Activated CD4-positive, alpha-beta memory T cell treated with anti-CD3 and anti-CD28 coated beads, Interleukin-2, amount 10 ng/mL, durations not matched to agents 7 days and 5 days (primary cell): ENCODE measurements at regions of chr9 and their contacts with region 1.

Region 1: GRCh38 chr9:131733541-131734061 is 6.3 kb downstream of the RAPGEF1 start:
- DNase-seq: peak; percentile 59
- H3K4me3 Mint-ChIP-seq: peak overlapping the region; percentile 71
- H3K27ac Mint-ChIP-seq: peak overlapping the region; percentile 99
- H3K4me1 Mint-ChIP-seq: peaks cover 85% of the 10 kb centered on the region
- H3K27me3 Mint-ChIP-seq: no peaks in the 10 kb centered on the region

Region 2: GRCh38 chr9:131641618-131642495 is 91.7 kb before region 1 on chr9:
- CTCF ChIA-PET with region 1: interaction called, 4 read pairs
- POLR2A ChIA-PET with region 1: interaction called, 13 read pairs
- DNase-seq: no peak
- H3K4me3 Mint-ChIP-seq: no peak overlapping the region
- H3K27ac Mint-ChIP-seq: peak overlapping the region; percentile 85
- H3K4me1 Mint-ChIP-seq: peaks cover 60% of the 10 kb centered on the region
- H3K27me3 Mint-ChIP-seq: no peaks in the 10 kb centered on the region

Region 3: DNA sequence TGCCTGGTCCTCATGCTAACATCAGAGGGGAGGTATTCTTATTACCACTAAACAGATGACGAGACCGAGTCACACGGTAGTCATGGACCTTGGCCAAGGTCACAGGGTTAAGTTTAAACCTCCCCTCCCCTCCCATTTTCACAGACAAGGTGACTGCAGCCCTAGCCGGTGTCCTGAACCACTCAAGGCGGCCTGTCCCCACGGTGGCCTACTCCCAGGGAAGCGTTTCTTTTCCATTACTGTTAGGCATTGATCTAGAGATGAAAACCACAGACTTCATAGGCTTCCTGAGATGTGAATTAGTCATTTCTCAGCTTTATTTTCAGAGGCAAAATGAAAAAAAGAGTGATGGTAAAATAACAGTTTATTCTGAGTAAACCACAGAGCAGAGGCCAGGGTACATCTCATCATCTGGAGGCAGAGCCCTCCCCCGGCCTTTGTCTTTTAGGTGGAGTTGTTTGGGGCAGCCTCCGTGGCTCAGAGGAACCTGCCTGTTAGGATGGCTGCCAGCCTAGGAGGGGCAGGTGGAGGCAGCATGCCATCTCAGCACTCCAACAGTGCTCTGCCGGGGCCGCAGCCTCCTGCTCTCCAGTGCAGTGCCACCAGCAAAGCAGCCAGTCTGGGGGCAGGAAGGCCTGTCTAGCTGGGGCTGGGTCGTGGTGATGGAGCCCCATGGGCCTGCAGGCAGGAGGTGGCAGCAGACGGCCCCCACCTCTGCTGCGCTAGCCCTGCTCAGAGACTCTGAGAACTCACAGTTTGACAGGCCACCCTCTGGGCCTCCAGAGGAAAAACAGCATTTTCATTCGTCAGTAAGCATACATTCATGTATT is 64.9 kb before region 1 on chr9:
- CTCF ChIA-PET with region 1: interaction called, 78 read pairs
- POLR2A ChIA-PET with region 1: interaction called, 362 read pairs
- DNase-seq: peak; percentile 76
- H3K4me3 Mint-ChIP-seq: peak overlapping the region; percentile 67
- H3K27ac Mint-ChIP-seq: peak overlapping the region; percentile 100
- H3K4me1 Mint-ChIP-seq: peaks cover 94% of the 10 kb centered on the region
- H3K27me3 Mint-ChIP-seq: no peaks in the 10 kb centered on the region

Region 4: GRCh38 chr9:131709771-131710454 is 23.7 kb before region 1 on chr9:
- CTCF ChIA-PET with region 1: interaction called, 21 read pairs
- POLR2A ChIA-PET with region 1: interaction called, 106 read pairs
- DNase-seq: peak; percentile 44
- H3K4me3 Mint-ChIP-seq: peak overlapping the region; percentile 39
- H3K27ac Mint-ChIP-seq: peak overlapping the region; percentile 88
- H3K4me1 Mint-ChIP-seq: peaks cover 79% of the 10 kb centered on the region
- H3K27me3 Mint-ChIP-seq: no peaks in the 10 kb centered on the region